Heart right ventricle (tissue), 16 donors: ENCODE measurements at regions of chr7 and their contacts with region 1.

Region 1: GRCh38 chr7:100965723-100966541 is 3.4 kb upstream of the MUC12 start:
- DNase-seq: peak; percentile 48 to 68
- ATAC-seq: peak; percentile 49 to 74 (median 58)
- H3K4me3 ChIP-seq: peak overlapping the region in 9 of 10 donors; percentile 4 to 31 (median 22)
- H3K27ac ChIP-seq: no peak overlapping the region
- H3K4me1 ChIP-seq: peaks cover 4 to 18% (median 14%) of the 10 kb centered on the region in 9 donors
- H3K27me3 ChIP-seq: peaks cover 35 to 90% (median 76%) of the 10 kb centered on the region in 7 donors
- CTCF ChIP-seq: peak in 8 of 9 donors; percentile 53 to 76 (median 66)

Region 2: GRCh38 chr7:99699946-99700345 is 1266.0 kb before region 1 on chr7:
- intact Hi-C with region 1: loop called in 1 of 10 experiments (anchors 5 kb)
- DNase-seq: no peak
- ATAC-seq: no peak
- H3K4me3 ChIP-seq: no peak overlapping the region
- H3K27ac ChIP-seq: no peak overlapping the region
- H3K4me1 ChIP-seq: no peaks in the 10 kb centered on the region
- H3K27me3 ChIP-seq: no peaks in the 10 kb centered on the region
- CTCF ChIP-seq: no peak

Region 3: DNA sequence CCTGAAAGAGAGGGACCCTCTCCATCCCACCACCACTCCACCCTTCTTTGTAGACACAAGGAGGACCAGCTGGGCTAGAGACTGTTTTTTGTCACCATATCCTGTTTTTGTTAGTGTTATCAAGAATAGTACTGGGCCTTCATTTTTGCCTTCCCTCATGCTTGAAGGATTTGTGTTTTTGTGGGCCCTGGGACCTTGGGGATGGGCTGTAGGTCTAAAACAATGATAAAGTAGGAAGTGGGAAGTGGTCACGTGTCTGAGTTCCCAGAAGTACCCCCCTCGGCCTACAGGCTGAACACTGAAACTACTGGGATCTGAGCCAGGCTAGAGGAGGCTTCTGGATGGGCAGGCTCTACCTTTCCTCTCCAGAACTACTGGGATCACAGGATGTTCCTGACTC is 418.1 kb before region 1 on chr7:
- intact Hi-C with region 1: no loop called
- DNase-seq: peak in 1 of 2 donors; percentile 62
- ATAC-seq: peak; percentile 32 to 65 (median 54)
- H3K4me3 ChIP-seq: no peak overlapping the region
- H3K27ac ChIP-seq: peak overlapping the region; percentile 63 to 94 (median 88)
- H3K4me1 ChIP-seq: peaks cover 23 to 75% (median 52%) of the 10 kb centered on the region in 9 donors
- H3K27me3 ChIP-seq: no peaks in the 10 kb centered on the region
- CTCF ChIP-seq: peak in 1 of 9 donors; percentile 12

Region 4: DNA sequence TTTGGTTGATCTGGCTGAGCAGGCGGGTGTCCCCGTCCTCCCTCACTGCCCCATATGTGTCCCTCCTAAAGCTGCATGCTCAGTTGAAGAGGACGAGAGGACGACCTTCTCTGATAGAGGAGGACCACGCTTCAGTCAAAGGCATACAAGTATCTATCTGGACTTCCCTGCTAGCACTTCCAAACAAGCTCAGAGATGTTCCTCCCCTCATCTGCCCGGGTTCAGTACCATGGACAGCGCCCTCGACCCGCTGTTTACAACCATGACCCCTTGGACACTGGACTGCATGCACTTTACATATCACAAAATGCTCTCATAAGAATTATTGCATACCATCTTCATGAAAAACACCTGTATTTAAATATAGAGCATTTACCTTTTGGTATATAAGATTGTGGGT is 92.4 kb after region 1 on chr7:
- intact Hi-C with region 1: loop called in 6 of 10 experiments (anchors 1 to 10 kb)
- DNase-seq: peak; percentile 69 to 74
- ATAC-seq: peak in 6 of 8 donors; percentile 58 to 93 (median 80)
- H3K4me3 ChIP-seq: no peak overlapping the region
- H3K27ac ChIP-seq: no peak overlapping the region
- H3K4me1 ChIP-seq: no peaks in the 10 kb centered on the region
- H3K27me3 ChIP-seq: peaks cover 0 to 85% (median 66%) of the 10 kb centered on the region in 7 donors
- CTCF ChIP-seq: no peak